A673 (cell line): ENCODE measurements at regions of chr10 and their contacts with region 1.

Region 1: GRCh38 chr10:2202401-2202800 is 465.1 kb upstream of the ADARB2 start:
- DNase-seq: no peak
- H3K4me3 ChIP-seq: no peak overlapping the region
- H3K27ac ChIP-seq: no peak overlapping the region
- H3K4me1 ChIP-seq: no peaks in the 10 kb centered on the region
- H3K27me3 ChIP-seq: peaks cover 77% of the 10 kb centered on the region
- CTCF ChIP-seq: no peak

Region 2: GRCh38 chr10:2228320-2228901 is 26.0 kb after region 1 on chr10:
- CTCF ChIA-PET with region 1: no interaction called
- POLR2A ChIA-PET with region 1: interaction called, 36 read pairs
- intact Hi-C with region 1: no loop called
- DNase-seq: no peak
- H3K4me3 ChIP-seq: no peak overlapping the region
- H3K27ac ChIP-seq: no peak overlapping the region
- H3K4me1 ChIP-seq: no peaks in the 10 kb centered on the region
- H3K27me3 ChIP-seq: peaks cover 39% of the 10 kb centered on the region
- CTCF ChIP-seq: no peak

Region 3: DNA sequence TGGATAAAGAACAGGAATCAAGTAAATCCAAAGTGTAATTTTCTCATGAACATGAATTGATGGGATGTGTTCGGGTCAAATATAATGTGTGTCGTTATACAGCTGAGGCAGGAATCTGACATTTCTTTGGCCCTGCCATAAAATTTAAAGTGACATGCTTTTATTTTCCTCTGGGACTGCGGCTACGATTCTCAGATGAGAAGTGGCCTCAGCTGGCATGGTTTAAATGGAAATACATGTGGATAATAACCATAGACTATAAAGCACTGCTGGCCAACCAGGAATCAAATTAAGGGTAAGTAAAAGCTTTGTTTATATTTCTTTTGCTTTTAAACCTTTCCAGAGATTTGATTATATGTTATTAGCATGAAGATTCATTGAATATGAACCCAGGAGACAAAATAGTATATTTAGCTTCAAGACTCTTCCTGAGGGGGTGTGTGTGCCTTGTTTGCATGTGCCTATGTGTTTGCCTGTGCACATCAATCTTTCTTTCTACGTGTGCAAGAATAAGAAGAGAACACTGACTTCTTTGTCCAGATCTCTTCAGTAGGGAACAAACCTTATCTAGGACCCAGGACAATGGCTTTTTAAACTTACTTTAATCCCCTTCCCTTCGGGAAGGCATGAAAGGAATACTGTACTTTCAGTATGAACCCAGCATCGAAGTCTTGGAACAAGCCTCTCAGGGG is 236.0 kb after region 1 on chr10:
- CTCF ChIA-PET with region 1: no interaction called
- POLR2A ChIA-PET with region 1: no interaction called
- intact Hi-C with region 1: no loop called
- DNase-seq: no peak
- H3K4me3 ChIP-seq: no peak overlapping the region
- H3K27ac ChIP-seq: no peak overlapping the region
- H3K4me1 ChIP-seq: no peaks in the 10 kb centered on the region
- H3K27me3 ChIP-seq: peaks cover 81% of the 10 kb centered on the region
- CTCF ChIP-seq: no peak

Region 4: GRCh38 chr10:2519139-2519538 is 316.7 kb after region 1 on chr10:
- CTCF ChIA-PET with region 1: no interaction called
- POLR2A ChIA-PET with region 1: no interaction called
- intact Hi-C with region 1: no loop called
- DNase-seq: no peak
- H3K4me3 ChIP-seq: no peak overlapping the region
- H3K27ac ChIP-seq: no peak overlapping the region
- H3K4me1 ChIP-seq: no peaks in the 10 kb centered on the region
- H3K27me3 ChIP-seq: peaks cover 58% of the 10 kb centered on the region
- CTCF ChIP-seq: no peak